Left cardiac atrium (tissue), 4 donors: ENCODE measurements at regions of chr2 and their contacts with region 1.

Region 1: GRCh38 chr2:63861220-63861822 is 19.6 kb downstream of the UGP2 start:
- DNase-seq: peak; percentile 53
- ATAC-seq: peak; percentile 46 to 80

Region 2: DNA sequence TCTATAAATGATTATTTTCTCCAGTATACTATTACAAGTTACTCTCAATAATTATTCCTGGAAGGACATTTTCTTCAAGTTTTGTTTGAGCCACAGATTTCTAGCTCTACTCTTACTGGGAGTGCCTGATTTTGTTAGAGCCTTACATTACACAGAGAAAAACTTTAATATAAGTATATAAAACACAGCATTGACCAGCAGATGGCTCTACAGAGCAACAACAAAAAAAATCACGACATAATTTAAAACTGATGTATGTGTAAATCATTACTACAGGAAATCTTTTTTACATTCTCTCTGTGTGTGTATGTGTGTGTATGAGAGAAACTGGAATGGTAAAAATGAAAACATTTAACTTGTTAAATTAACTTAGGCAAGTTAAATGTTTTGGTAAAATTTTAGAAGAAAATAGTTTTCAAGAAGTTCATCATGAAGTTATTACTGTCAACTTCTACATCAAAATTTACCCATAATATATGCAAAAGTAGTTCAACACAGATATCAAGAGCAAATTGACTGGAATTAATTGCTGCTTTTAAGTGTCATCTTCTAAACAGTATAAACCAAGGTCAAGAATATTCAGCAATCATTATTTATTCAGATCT is 169.2 kb before region 1 on chr2:
- intact Hi-C with region 1: loop called (anchors 5 kb)
- DNase-seq: no peak
- ATAC-seq: peak in 1 of 2 donors; percentile 41